PC-9 (cell line): ENCODE measurements at regions of chr17 and their contacts with region 1.

Region 1: DNA sequence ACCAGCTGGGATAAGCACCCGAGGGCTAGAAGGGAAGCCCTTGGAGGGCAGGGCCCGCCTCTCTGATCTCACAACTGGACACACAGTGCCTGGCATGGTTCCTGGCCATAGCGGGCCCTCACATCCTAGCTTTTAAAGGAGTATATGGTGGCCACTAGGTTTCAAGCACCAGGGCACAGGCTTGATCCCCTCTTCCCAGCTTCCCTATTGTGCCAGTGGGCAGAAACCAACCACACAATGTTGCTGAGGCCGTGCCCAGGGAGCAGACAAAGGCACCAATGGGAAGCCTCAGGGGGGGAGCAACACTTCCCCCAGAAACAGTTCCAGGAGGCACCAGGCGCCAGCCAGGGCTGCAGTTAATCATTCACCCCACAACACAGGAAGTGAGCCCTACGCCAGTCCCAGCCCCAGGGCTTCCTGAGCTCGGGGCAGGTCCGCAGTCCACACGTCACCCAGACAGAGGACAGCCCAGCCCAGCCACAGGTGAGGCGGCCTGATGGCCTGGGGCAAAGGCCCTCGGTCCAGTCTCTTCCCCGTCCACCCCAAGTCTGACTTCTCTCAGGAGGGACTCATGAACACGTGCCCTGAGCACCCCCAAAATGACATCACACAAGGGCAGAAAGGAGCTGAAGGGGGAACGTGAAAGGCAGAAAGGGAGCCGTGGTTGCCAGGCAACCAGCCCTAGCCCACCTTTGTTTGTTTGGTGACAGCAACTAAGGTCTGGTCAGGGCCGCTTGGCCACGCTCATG is 12.8 kb downstream of the SMIM5 start:
- DNase-seq: peak; percentile 84 to 85
- H3K4me3 ChIP-seq: no peak overlapping the region
- H3K27ac ChIP-seq: peak overlapping the region; percentile 92
- H3K4me1 ChIP-seq: peaks cover 51% of the 10 kb centered on the region
- H3K27me3 ChIP-seq: no peaks in the 10 kb centered on the region
- CTCF ChIP-seq: no peak

Region 2: DNA sequence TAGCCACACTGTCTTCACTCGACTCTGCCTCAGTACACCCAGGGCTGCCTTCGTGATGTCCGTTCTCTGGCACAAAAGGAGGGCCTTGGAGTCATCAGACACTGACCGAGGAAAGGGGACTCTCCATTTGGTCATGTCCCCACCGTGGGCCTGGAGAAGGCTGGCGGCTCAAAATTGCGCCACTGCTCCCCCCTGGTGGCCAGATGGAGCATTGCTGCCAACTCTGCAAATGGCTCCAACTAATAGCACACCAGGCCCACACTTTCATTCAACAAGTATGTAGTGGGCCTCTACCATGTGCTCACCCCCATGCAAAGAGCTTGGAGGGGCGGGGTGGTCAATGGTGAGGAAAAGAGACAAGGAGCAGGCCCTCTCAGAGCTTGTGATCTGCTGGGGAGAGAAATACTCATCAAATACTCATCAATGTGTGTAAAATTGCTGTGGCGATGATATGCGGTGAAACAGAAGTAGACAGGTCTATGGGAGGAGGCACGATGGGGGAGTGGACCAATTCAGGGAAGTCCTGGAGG is 781.1 kb before region 1 on chr17:
- CTCF ChIA-PET with region 1: no interaction called
- POLR2A ChIA-PET with region 1: no interaction called
- intact Hi-C with region 1: no loop called
- DNase-seq: peak; percentile 43 to 68
- H3K4me3 ChIP-seq: no peak overlapping the region
- H3K27ac ChIP-seq: no peak overlapping the region
- H3K4me1 ChIP-seq: no peaks in the 10 kb centered on the region
- H3K27me3 ChIP-seq: peaks cover 5% of the 10 kb centered on the region; the same call in 1 of the 2 replicates
- CTCF ChIP-seq: peak; percentile 97

Region 3: DNA sequence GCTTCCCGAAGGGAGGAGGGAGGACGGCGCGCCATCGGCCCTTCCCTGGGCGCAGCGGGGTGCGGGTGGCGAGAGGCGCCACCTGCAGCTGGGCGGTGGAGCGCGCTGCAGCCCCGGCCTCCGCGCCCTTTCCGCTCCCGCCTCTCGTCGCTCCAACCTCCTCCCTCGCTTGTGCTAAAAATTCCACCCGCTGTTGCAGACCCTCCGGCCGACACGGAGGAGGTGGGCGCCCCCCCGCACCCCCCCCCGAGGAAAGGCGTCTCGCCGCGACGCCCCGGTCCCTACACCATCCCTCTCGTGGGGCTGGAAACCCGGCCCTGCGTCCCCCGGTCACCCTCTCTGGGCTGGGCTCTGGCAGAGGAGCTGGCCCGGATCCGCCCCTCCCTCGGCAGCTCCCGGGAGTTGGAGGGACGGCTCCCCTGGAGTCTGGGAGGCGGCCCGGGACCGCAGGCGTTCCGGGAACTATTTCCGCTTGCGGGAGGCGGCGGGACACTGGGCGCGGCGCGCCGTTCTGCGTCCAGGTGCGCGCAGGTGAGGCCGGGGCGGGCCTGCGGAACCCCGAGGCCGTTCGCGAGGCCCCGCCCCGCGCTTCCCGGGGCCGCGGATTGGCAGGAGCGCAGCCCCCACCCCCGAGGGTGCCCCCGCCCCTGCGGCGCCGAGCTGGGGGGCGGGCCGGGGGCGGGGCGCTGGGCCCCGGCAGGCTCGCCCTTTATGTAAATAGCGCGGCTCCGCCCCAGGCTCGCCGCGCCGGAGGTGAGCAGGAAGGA is 120.9 kb before region 1 on chr17 and contains the start of gene LLGL2:
- CTCF ChIA-PET with region 1: no interaction called
- POLR2A ChIA-PET with region 1: interaction called, 19 read pairs
- intact Hi-C with region 1: loop called (anchors 5 kb)
- DNase-seq: peak; percentile 77 to 95
- H3K4me3 ChIP-seq: peak within 1 kb of the TSS; percentile 100
- H3K27ac ChIP-seq: peak within 1 kb of the TSS; percentile 55
- H3K4me1 ChIP-seq: peaks cover 21% of the 10 kb centered on the region
- H3K27me3 ChIP-seq: no peaks in the 10 kb centered on the region
- CTCF ChIP-seq: peak; percentile 60
- total RNA-seq, gene LLGL2: 138 and 156 TPM in 2 replicates

Region 4: GRCh38 chr17:75531730-75532090 is 114.4 kb before region 1 on chr17:
- CTCF ChIA-PET with region 1: no interaction called
- POLR2A ChIA-PET with region 1: interaction called, 19 read pairs
- intact Hi-C with region 1: loop called (anchors 5 kb)
- DNase-seq: peak; percentile 87 to 92
- H3K4me3 ChIP-seq: no peak overlapping the region
- H3K27ac ChIP-seq: peak overlapping the region; percentile 89
- H3K4me1 ChIP-seq: peaks cover 32% of the 10 kb centered on the region
- H3K27me3 ChIP-seq: no peaks in the 10 kb centered on the region
- CTCF ChIP-seq: no peak

Region 5: DNA sequence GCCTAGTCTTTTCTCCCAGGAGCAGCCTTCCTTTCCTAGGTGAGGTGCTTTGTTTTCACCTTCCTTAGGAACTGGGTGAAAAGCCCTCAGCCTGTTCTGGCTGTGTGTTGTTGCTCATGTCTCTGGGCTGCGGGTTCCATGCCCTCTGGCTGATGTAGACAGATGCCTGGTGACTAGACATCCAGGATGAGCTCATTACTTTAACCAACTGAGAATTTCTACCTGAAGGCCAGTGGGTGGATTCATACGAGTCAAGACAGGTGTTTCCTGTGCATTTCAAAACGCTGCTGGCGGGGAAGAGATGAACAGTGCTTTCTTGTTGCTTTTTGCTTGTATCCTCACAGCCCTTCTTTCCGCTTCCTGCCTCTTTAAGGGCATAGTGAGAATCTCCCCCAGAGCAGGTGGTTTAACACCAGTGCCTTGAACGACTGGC is 43.4 kb after region 1 on chr17:
- CTCF ChIA-PET with region 1: no interaction called
- POLR2A ChIA-PET with region 1: no interaction called
- intact Hi-C with region 1: loop called (anchors 1 kb)
- DNase-seq: peak; percentile 57 to 96
- H3K4me3 ChIP-seq: peak overlapping the region; percentile 28; the same call in 1 of the 2 replicates
- H3K27ac ChIP-seq: peak overlapping the region; percentile 84
- H3K4me1 ChIP-seq: peaks cover 64% of the 10 kb centered on the region
- H3K27me3 ChIP-seq: no peaks in the 10 kb centered on the region
- CTCF ChIP-seq: no peak